Caco-2 (cell line): ENCODE measurements at regions of chr13 and their contacts with region 1.

Region 1: DNA sequence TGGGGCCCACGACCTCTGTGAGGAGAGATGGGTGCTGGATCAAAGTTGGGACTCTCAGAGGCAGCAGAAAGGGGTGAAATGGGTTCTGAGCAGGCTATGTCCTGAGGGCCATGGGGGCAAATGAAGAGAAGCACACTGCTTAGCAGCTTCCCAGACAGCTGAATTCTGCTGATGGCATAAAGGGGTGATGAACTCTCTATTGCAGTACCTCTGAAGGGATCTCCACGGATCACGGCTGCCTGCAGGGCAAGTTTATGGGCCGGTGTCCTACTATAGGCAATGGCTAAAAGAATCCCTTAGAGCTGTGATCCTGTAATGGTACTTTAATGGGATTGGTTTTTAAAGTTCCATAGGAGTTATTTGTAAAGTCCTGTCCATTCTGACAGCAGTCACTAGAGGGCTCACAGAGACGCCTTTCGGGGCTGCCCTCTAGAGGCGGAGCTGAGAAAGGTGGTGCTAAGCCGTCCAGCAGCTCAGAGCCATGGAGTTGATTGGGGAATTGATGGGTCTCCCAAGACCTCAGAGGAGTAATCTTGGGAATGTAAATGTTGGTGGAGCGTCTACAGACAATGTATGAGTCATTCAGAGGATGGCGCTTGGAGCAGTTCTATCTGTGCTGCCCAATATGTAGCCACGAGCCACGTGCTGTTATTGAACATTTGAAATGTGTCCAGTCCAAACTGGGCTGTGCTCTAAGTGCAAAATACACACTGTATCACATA is 287.3 kb downstream of the COG6 start:
- DNase-seq: peak; percentile 84 to 86
- H3K4me3 ChIP-seq: no peak overlapping the region
- H3K4me3 Mint-ChIP-seq: no peak overlapping the region
- H3K27ac Mint-ChIP-seq: no peak overlapping the region
- H3K4me1 ChIP-seq: no peaks in the 10 kb centered on the region
- H3K4me1 Mint-ChIP-seq: peaks cover 12% of the 10 kb centered on the region
- H3K27me3 ChIP-seq: no peaks in the 10 kb centered on the region
- H3K27me3 Mint-ChIP-seq: peaks cover 21% of the 10 kb centered on the region
- CTCF ChIP-seq: peak; percentile 99 to 100

Region 2: DNA sequence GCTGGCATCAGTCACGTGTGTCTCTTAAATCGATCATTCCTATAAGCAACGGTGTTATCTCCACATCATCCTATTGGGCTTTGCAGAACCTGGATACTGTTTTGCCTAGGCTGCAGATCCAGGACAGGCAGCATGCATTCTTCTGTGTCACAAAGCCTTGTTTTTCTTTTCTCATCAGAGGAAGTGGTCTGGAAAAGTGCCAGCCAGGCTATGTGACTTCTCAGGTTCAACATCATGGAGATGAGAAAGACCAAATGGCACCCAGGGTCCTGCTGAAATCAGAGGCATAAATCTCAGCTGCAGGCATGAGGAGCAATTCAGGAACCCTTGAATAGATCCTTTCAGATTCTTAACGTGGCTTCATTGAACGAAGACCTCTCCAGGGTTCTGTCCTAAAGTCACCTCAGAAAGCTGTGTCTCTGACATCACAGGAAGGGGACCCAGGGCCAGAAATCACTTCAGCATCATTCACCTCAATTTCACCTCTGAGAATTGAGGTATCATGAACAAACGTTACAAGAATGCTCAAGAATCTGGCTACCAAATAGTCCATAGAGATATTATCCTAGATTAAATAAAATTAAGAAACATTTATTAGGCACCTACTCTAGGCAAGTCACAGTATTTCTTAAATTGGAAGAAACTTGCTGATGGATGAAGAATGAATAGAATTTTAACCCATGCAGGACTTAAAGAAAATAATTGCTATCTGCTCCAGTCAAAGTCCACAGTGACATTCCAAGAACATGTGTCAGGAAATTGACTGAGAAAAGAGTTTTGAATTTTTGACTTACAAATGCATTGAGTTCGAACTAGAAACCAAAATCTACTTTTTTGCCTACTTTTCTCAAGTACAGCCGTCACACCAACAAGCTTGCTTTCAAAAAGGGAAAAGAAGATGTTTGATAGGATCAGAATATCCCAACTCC is 163.1 kb before region 1 on chr13:
- CTCF ChIA-PET with region 1: interaction called, 9 read pairs
- POLR2A ChIA-PET with region 1: no interaction called
- intact Hi-C with region 1: loop called (anchors 1 kb)
- DNase-seq: no peak
- H3K4me3 ChIP-seq: no peak overlapping the region
- H3K4me3 Mint-ChIP-seq: no peak overlapping the region
- H3K27ac Mint-ChIP-seq: no peak overlapping the region
- H3K4me1 ChIP-seq: no peaks in the 10 kb centered on the region
- H3K4me1 Mint-ChIP-seq: peaks cover 7% of the 10 kb centered on the region
- H3K27me3 ChIP-seq: no peaks in the 10 kb centered on the region
- H3K27me3 Mint-ChIP-seq: peaks cover 2% of the 10 kb centered on the region
- CTCF ChIP-seq: no peak

Region 3: DNA sequence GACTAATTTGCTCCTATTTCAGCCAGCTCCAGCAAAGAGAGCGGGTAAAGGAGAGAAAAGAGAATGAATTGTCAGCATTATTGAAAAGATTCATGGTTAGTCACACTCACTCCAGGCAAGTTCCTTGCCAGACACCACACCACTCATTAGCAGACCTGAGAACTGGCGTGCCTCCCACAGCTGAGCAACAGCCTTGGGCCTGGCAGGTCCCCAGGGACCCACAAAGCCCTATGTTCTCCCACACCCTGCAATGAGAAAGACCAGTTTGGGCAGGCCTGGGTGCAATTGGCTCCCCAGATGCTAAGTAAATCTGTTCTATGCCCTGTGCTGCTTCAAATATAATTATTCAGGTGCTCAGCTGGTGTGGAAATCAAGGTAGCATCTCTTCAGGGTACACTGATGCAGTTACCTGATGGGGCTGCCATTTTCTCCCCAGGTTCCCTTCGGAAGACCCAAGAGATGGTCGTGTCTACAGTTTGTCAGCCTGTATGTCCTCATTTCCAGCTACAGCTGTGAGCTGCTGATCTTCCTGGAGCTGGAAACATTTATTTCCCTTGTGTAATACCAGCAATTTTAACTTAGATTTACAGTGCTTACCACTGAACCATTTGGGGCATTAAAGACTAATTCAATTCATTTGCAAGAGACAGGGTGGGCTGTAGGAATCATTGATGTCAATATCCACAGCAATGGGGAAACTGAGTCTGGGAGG is 117.7 kb after region 1 on chr13:
- CTCF ChIA-PET with region 1: interaction called, 3 read pairs
- POLR2A ChIA-PET with region 1: no interaction called
- intact Hi-C with region 1: loop called (anchors 5 kb)
- DNase-seq: no peak
- H3K4me3 ChIP-seq: no peak overlapping the region
- H3K4me3 Mint-ChIP-seq: no peak overlapping the region
- H3K27ac Mint-ChIP-seq: no peak overlapping the region
- H3K4me1 ChIP-seq: peaks cover 22% of the 10 kb centered on the region
- H3K4me1 Mint-ChIP-seq: peaks cover 22% of the 10 kb centered on the region
- H3K27me3 ChIP-seq: no peaks in the 10 kb centered on the region
- H3K27me3 Mint-ChIP-seq: no peaks in the 10 kb centered on the region
- CTCF ChIP-seq: no peak

Region 4: DNA sequence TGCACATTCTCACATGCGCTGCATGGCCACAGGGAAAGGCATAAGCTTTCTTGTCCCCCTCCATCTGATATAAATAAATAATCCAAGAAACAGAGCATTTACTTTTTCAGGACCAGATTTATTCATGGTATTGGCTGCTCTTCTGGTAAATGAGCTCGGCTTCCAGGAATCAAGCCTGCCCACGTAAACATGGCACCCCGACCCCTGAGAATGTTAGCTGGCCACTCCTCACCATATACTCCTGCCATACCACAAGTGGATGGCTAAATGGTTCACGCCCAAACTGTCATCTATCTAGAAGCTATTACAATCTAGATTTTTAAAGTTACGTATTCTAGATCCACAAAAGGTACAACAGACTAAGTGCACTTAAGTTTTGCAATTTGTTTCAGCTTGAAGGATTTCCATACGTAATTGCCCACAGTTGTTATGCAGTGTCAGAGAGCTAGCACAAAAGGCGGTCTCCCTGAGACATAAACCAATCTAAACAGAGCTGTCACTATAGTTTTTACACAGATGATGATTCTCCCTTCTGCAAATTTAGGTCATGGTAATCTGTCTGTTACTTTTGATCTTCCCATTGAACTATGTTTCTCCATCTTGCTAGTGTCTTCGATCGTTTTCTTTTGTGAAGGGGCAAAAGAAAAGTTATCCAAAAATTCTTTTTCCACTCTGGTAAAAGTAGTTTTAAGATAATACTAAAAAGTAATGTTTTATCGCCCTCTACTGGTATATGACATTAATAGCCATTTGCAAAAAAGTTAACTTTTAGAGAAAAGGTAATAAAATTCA is 739.9 kb after region 1 on chr13:
- CTCF ChIA-PET with region 1: interaction called, 13 read pairs
- POLR2A ChIA-PET with region 1: no interaction called
- intact Hi-C with region 1: loop called (anchors 1 kb)
- DNase-seq: no peak
- H3K4me3 ChIP-seq: no peak overlapping the region
- H3K4me3 Mint-ChIP-seq: no peak overlapping the region
- H3K27ac Mint-ChIP-seq: no peak overlapping the region
- H3K4me1 ChIP-seq: peaks cover 15% of the 10 kb centered on the region
- H3K4me1 Mint-ChIP-seq: peaks cover 18% of the 10 kb centered on the region
- H3K27me3 ChIP-seq: no peaks in the 10 kb centered on the region
- H3K27me3 Mint-ChIP-seq: no peaks in the 10 kb centered on the region
- CTCF ChIP-seq: peak; percentile 36 to 71

Region 5: GRCh38 chr13:40777166-40777808 is 834.6 kb after region 1 on chr13:
- CTCF ChIA-PET with region 1: interaction called, 6 read pairs
- POLR2A ChIA-PET with region 1: no interaction called
- intact Hi-C with region 1: loop called (anchors 1 kb)
- DNase-seq: peak in 1 of 2 experiments; percentile 73
- H3K4me3 ChIP-seq: peak overlapping the region; percentile 28
- H3K4me3 Mint-ChIP-seq: peak overlapping the region; percentile 39
- H3K27ac Mint-ChIP-seq: no peak overlapping the region
- H3K4me1 ChIP-seq: peaks cover 19% of the 10 kb centered on the region
- H3K4me1 Mint-ChIP-seq: peaks cover 13% of the 10 kb centered on the region
- H3K27me3 ChIP-seq: no peaks in the 10 kb centered on the region
- H3K27me3 Mint-ChIP-seq: no peaks in the 10 kb centered on the region
- CTCF ChIP-seq: peak; percentile 82 to 92